Panc1 (cell line): ENCODE measurements at regions of chr19 and their contacts with region 1.

Region 1: GRCh38 chr19:41641879-41642485 is 15.1 kb upstream of the CEACAM4 start:
- DNase-seq: peak; percentile 33
- ATAC-seq: peak; percentile 94
- H3K4me3 ChIP-seq: no peak overlapping the region
- H3K27ac ChIP-seq: no peak overlapping the region
- H3K4me1 ChIP-seq: no peaks in the 10 kb centered on the region
- H3K27me3 ChIP-seq: no peaks in the 10 kb centered on the region
- CTCF ChIP-seq: peak; percentile 89

Region 2: DNA sequence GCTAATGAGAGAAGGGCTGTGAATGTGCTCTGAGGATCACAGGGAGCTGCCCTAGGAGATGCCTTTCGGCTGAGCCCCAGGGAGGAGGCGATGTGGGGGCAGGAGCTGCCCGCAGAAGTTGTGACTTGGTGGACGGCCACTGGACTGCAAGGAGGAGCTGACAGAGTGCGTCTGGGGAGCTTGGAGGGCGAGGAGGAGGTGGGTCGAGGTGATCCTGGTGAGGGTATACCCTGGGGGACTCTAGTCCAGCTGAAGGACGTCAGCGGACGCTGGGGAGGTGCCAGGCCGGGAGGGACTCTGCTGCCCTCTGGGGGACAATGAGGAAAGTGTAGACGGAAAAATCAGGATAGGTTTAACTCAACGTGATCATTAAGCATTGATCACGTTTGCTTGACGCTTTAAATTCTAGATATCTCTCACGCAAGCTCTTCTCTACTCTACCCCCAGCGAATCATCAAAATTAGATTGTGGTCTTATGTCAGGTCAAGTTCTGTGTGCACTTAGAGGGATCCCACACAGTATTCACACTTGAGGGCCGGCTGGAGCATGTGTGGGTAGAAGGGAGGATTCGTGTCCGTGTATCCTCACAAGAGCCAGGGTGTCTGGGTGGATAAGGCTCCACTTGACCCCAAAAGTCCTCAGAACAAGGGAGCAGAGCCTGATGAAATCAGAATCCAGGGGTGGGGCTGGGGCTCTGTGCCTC is 49.4 kb after region 1 on chr19:
- CTCF ChIA-PET with region 1: interaction called, 9 read pairs
- POLR2A ChIA-PET with region 1: no interaction called
- in situ Hi-C with region 1: no loop called
- intact Hi-C with region 1: loop called (anchors 5 kb)
- DNase-seq: peak; percentile 28
- ATAC-seq: peak; percentile 76
- H3K4me3 ChIP-seq: no peak overlapping the region
- H3K27ac ChIP-seq: no peak overlapping the region
- H3K4me1 ChIP-seq: no peaks in the 10 kb centered on the region
- H3K27me3 ChIP-seq: no peaks in the 10 kb centered on the region
- CTCF ChIP-seq: peak; percentile 82

Region 3: DNA sequence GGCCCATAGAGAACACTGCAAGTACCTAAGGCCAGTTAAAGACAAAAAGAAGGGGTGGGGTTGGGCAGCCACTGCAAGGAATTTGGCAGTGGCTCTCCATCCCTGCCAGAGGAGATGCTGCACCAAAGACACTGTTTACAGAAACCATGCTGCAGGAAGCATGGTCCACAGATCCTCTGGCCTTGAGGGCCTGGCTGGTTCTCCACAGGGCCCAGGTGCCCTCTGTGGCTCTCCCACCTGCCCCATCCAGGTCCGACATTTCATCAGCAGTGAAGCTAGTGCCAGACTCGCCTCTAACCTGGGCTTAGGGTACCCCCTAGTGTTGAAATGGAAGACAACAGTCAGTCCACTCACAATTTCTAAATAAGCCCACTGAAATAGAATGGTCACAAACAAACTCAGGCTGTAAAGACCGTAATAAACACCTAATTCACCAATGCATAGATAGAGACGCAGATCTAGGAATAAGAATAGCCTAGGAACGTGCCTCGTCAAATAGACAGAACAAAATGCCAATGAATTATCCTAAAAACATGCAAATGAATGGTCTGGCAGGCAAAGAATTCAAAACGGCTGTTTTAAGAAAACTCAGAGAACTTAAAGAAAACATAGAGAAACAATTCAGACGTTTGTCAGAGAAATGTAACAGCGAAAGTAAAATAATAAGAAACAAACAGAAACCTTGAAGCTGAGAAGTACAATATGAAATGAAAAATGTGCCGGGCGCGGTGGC is 179.2 kb after region 1 on chr19:
- CTCF ChIA-PET with region 1: no interaction called
- POLR2A ChIA-PET with region 1: no interaction called
- in situ Hi-C with region 1: no loop called
- intact Hi-C with region 1: no loop called
- DNase-seq: peak; percentile 18
- ATAC-seq: peak; percentile 88
- H3K4me3 ChIP-seq: no peak overlapping the region
- H3K27ac ChIP-seq: no peak overlapping the region
- H3K4me1 ChIP-seq: no peaks in the 10 kb centered on the region
- H3K27me3 ChIP-seq: no peaks in the 10 kb centered on the region
- CTCF ChIP-seq: peak; percentile 73